PC-9 (cell line): ENCODE measurements at regions of chr11 and their contacts with region 1.

Region 1: DNA sequence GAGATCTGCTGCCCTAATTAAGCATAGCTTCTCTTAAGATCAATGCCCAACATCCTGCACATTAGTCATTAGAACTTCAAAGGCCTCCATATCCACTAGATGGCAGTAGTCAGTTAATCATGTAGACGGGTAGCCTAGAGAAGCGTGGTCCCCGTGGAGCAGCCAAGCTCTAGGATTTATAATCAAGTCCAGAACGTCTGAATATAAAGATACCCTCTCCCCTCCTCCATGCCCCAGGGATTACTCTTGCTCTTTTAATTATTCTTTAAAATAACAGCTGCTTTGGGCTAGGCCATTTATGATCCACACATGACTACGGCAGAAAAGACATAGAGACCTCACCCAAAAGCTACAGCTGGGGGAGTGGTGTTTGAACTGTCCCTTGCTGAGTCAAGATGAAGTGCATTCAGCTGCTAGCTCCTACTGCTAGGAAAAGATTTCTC is 327.6 kb upstream of the PLET1 start:
- DNase-seq: peak; percentile 20 to 76
- H3K4me3 ChIP-seq: no peak overlapping the region
- H3K27ac ChIP-seq: no peak overlapping the region
- H3K4me1 ChIP-seq: peaks cover 5% of the 10 kb centered on the region; the same call in 1 of the 2 replicates
- H3K27me3 ChIP-seq: no peaks in the 10 kb centered on the region
- CTCF ChIP-seq: peak; percentile 91

Region 2: DNA sequence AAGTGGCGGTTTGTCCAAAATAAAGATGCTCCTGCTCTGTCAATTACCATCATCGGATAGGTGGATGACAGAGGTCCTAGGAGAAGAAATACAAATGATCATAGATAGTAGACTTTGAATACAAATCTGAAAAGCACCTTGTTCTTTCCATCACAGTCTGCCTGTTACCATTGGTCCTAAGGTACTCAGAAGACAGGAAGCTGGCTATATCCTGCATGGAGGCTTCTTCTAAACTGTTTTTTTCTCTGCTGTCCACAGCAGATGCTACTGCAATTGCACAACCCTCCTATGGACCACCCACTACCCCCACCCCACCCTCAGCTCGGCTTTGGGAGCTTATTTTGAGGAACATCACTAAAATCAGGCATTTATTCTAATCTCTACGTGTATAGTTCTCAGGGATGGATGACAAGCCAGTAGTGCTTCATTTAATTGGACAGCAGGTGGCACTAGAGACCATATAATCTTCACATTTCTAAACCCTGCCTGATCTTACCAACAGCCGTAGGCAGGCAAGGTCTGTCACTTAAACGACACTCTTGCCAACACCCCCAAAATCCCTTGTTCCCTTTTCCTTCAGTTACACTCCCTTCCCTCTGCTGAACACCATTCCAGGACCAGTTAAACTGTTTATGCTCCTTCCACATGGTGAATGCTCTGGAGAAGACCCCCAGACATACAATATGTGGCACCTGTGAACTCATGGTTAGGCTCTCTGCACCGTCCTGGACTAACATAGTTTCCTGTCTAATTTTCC is 368.6 kb before region 1 on chr11:
- CTCF ChIA-PET with region 1: no interaction called
- POLR2A ChIA-PET with region 1: no interaction called
- intact Hi-C with region 1: loop called (anchors 10 kb)
- DNase-seq: peak; percentile 25 to 67
- H3K4me3 ChIP-seq: no peak overlapping the region
- H3K27ac ChIP-seq: no peak overlapping the region
- H3K4me1 ChIP-seq: peaks cover 28% of the 10 kb centered on the region
- H3K27me3 ChIP-seq: no peaks in the 10 kb centered on the region
- CTCF ChIP-seq: peak; percentile 85

Region 3: DNA sequence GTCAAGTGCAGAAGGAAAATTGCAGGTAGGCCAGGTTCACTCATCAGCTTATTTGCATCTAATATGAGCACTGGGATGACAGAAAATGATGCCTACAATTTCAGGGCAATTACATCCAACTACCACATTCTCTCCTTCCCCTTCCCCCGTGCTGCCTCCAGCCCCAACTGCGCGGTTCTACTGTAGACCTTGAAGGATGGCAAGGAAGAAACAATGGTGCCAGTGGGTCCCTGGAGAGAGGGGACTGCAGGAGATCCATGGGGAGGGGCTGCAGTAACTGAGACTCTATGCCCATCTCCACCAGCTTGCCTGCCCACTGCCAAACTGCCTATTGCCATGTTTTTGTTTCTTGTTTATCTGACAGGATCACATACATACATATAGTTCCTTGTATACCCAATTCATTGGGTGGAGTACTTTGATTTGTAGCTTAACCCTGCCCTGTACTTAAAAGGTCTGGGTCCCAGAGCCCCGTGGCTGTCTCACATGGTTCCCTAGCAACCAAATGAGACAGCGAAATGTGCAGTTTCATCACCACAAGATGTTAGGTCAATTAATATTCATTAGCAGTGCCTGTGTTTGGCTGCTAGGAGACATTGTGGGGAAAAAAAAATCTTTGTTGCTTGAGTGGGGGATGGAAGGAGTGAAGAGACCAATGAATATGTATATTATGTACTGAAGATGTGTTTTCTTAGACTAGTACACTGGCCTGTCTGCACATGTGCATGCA is 74.1 kb before region 1 on chr11:
- CTCF ChIA-PET with region 1: no interaction called
- POLR2A ChIA-PET with region 1: no interaction called
- intact Hi-C with region 1: no loop called
- DNase-seq: no peak
- H3K4me3 ChIP-seq: no peak overlapping the region
- H3K27ac ChIP-seq: no peak overlapping the region
- H3K4me1 ChIP-seq: no peaks in the 10 kb centered on the region
- H3K27me3 ChIP-seq: no peaks in the 10 kb centered on the region
- CTCF ChIP-seq: no peak

Region 4: GRCh38 chr11:112795142-112795815 is 207.0 kb after region 1 on chr11:
- CTCF ChIA-PET with region 1: interaction called, 3 read pairs
- POLR2A ChIA-PET with region 1: no interaction called
- intact Hi-C with region 1: loop called (anchors 2 kb)
- DNase-seq: peak in 1 of 2 experiments; percentile 30
- H3K4me3 ChIP-seq: no peak overlapping the region
- H3K27ac ChIP-seq: no peak overlapping the region
- H3K4me1 ChIP-seq: no peaks in the 10 kb centered on the region
- H3K27me3 ChIP-seq: no peaks in the 10 kb centered on the region
- CTCF ChIP-seq: peak; percentile 81